Aorta (tissue), 5 donors: ENCODE measurements at regions of chr1 and their contacts with region 1.

Region 1: GRCh38 chr1:208238710-208239472 is 5.3 kb downstream of the PLXNA2 start:
- DNase-seq: no peak
- ATAC-seq: peak; percentile 68
- H3K4me3 ChIP-seq: no peak overlapping the region
- H3K27ac ChIP-seq: no peak overlapping the region
- H3K4me1 ChIP-seq: peaks cover 3 to 5% of the 10 kb centered on the region in 2 donors
- H3K27me3 ChIP-seq: no peaks in the 10 kb centered on the region

Region 2: DNA sequence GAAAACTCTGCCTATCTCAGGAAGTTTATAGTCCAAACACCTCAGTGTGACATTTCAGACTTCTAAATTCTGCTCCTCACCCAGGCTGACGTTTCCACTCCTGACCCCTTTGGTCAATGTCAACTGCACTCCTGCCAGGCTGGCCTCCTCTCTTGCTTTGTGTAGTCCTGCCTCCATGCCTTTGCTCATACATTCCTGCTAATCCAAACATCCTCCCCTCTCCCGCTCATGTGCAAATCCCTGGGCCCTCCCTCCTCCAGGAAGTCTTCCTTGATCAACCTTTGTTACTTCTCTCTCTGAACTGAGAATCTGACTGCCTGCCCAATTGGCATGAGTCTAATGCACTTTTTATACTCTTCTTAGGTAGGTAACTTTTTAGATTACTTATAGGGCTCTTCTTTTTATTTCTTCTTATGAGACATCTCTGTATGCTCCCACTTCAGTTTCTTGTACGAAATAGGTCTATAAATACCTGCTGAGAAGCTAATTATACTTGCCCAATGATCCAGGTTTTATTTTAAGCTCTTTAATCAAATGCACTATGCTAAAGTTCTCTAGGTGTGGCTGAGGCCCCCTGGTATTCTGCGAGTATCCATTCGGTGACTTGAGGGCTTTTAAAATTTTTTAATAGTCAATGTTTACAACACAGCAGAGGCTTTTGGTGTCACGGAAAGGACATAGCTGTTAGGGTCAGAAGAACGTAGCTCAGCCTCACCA is 122.8 kb before region 1 on chr1:
- intact Hi-C with region 1: no loop called
- DNase-seq: no peak
- ATAC-seq: no peak
- H3K4me3 ChIP-seq: no peak overlapping the region
- H3K27ac ChIP-seq: no peak overlapping the region
- H3K4me1 ChIP-seq: peaks cover 0 to 6% of the 10 kb centered on the region in 2 donors
- H3K27me3 ChIP-seq: no peaks in the 10 kb centered on the region

Region 3: DNA sequence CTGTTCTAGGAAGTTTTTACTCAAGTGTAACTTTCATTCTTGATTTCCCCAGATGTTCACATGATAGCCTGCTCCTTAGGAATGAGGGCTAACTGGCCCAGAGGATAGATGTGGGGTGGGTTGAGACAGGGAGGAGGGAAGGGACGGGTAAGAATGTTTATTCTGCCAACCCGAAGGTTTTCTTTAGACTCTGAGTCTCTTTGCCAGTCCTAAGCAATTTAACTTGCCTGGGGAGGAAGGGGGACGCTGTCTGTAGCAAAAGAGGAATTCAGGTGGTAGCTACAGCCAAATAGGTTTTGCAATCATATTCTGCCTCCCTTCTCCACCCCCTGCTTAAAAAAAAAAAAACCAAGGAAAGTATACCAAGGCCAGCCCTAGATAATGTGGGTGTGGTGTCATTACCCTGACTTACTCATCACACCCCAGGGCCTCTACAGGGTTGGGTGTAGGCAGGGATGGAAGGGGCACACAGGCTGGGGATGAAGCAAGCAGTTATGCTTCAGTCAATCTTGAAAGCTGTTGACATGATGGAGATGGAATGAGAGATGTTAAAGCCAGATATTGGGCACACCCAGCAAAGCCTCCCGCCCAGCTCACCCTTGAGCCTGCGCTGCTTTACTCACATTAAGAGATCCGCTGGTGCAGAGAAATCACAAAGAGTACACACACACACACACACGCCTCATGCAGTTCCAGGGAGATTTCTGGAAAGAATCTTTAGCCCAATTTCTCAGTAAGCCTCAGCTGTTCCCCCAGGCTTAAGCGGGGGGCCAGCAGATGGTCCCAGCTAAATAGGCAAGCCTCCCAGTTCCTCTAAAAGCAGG is 54.6 kb before region 1 on chr1:
- intact Hi-C with region 1: loop called in 1 of 2 experiments (anchors 10 kb)
- DNase-seq: peak in 1 of 2 donors; percentile 52
- ATAC-seq: peak; percentile 84
- H3K4me3 ChIP-seq: no peak overlapping the region
- H3K27ac ChIP-seq: no peak overlapping the region
- H3K4me1 ChIP-seq: no peaks in the 10 kb centered on the region
- H3K27me3 ChIP-seq: no peaks in the 10 kb centered on the region